Caco-2 (cell line): ENCODE measurements at regions of chr2 and their contacts with region 1.

Region 1: GRCh38 chr2:64523666-64524603 is at the start of gene AFTPH:
- DNase-seq: peak; percentile 99 to 100
- H3K4me3 ChIP-seq: peak within 1 kb of the TSS; percentile 95
- H3K4me3 Mint-ChIP-seq: peak within 1 kb of the TSS; percentile 87
- H3K27ac Mint-ChIP-seq: peak within 1 kb of the TSS; percentile 94
- H3K4me1 ChIP-seq: peaks cover 4% of the 10 kb centered on the region; the same call in 1 of the 2 replicates
- H3K4me1 Mint-ChIP-seq: no peaks in the 10 kb centered on the region
- H3K27me3 ChIP-seq: no peaks in the 10 kb centered on the region
- H3K27me3 Mint-ChIP-seq: peaks cover 2% of the 10 kb centered on the region
- CTCF ChIP-seq: no peak
- total RNA-seq, gene AFTPH: 29.3 and 30.1 TPM in 2 replicates

Region 2: GRCh38 chr2:64363848-64364247 is 160.1 kb before region 1 on chr2:
- CTCF ChIA-PET with region 1: no interaction called
- POLR2A ChIA-PET with region 1: no interaction called
- intact Hi-C with region 1: no loop called
- DNase-seq: no peak
- H3K4me3 ChIP-seq: no peak overlapping the region
- H3K4me3 Mint-ChIP-seq: no peak overlapping the region
- H3K27ac Mint-ChIP-seq: no peak overlapping the region
- H3K4me1 ChIP-seq: peaks cover 24% of the 10 kb centered on the region
- H3K4me1 Mint-ChIP-seq: peaks cover 13% of the 10 kb centered on the region
- H3K27me3 ChIP-seq: no peaks in the 10 kb centered on the region
- H3K27me3 Mint-ChIP-seq: no peaks in the 10 kb centered on the region
- CTCF ChIP-seq: no peak

Region 3: DNA sequence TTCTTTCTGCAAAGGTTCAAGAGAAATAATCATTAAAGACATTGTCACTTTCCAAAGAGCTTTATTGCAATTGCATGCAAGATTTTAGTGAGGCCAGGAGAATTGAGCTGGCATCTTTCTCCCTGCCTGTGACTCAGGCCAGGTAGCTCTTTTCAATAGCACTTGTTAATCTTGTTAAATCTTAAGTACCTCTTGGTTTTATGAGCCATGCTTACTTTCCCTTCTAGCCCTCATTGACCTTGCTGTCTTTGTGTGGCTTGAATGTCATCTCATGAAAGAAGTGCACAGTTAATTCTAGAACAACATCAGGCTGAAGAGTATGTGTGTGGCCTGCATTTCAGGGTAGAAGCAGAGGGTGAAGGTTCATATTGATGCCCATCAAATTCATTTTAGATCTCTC is 84.7 kb before region 1 on chr2:
- CTCF ChIA-PET with region 1: no interaction called
- POLR2A ChIA-PET with region 1: no interaction called
- intact Hi-C with region 1: no loop called
- DNase-seq: no peak
- H3K4me3 ChIP-seq: no peak overlapping the region
- H3K4me3 Mint-ChIP-seq: no peak overlapping the region
- H3K27ac Mint-ChIP-seq: no peak overlapping the region
- H3K4me1 ChIP-seq: peaks cover 15% of the 10 kb centered on the region
- H3K4me1 Mint-ChIP-seq: peaks cover 3% of the 10 kb centered on the region
- H3K27me3 ChIP-seq: no peaks in the 10 kb centered on the region
- H3K27me3 Mint-ChIP-seq: no peaks in the 10 kb centered on the region
- CTCF ChIP-seq: no peak

Region 4: GRCh38 chr2:64453770-64454385 is 70.1 kb before region 1 on chr2 and contains the start of gene LGALSL:
- CTCF ChIA-PET with region 1: interaction called, 4 read pairs
- POLR2A ChIA-PET with region 1: interaction called, 4 read pairs
- intact Hi-C with region 1: loop called (anchors 1 kb)
- DNase-seq: peak; percentile 93 to 94
- H3K4me3 ChIP-seq: peak within 1 kb of the TSS; percentile 80
- H3K4me3 Mint-ChIP-seq: peak within 1 kb of the TSS; percentile 94
- H3K27ac Mint-ChIP-seq: peak within 1 kb of the TSS; percentile 98
- H3K4me1 ChIP-seq: peaks cover 11% of the 10 kb centered on the region
- H3K4me1 Mint-ChIP-seq: peaks cover 13% of the 10 kb centered on the region
- H3K27me3 ChIP-seq: no peaks in the 10 kb centered on the region
- H3K27me3 Mint-ChIP-seq: no peaks in the 10 kb centered on the region
- CTCF ChIP-seq: no peak
- total RNA-seq, gene LGALSL: 36.9 and 37.2 TPM in 2 replicates

Region 5: GRCh38 chr2:64562148-64562784 is 38.3 kb after region 1 on chr2:
- CTCF ChIA-PET with region 1: interaction called, 3 read pairs
- POLR2A ChIA-PET with region 1: no interaction called
- intact Hi-C with region 1: loop called (anchors 1 kb)
- DNase-seq: no peak
- H3K4me3 ChIP-seq: no peak overlapping the region
- H3K4me3 Mint-ChIP-seq: no peak overlapping the region
- H3K27ac Mint-ChIP-seq: no peak overlapping the region
- H3K4me1 ChIP-seq: no peaks in the 10 kb centered on the region
- H3K4me1 Mint-ChIP-seq: no peaks in the 10 kb centered on the region
- H3K27me3 ChIP-seq: no peaks in the 10 kb centered on the region
- H3K27me3 Mint-ChIP-seq: no peaks in the 10 kb centered on the region
- CTCF ChIP-seq: peak in 1 of 2 experiments; percentile 23

Region 6: DNA sequence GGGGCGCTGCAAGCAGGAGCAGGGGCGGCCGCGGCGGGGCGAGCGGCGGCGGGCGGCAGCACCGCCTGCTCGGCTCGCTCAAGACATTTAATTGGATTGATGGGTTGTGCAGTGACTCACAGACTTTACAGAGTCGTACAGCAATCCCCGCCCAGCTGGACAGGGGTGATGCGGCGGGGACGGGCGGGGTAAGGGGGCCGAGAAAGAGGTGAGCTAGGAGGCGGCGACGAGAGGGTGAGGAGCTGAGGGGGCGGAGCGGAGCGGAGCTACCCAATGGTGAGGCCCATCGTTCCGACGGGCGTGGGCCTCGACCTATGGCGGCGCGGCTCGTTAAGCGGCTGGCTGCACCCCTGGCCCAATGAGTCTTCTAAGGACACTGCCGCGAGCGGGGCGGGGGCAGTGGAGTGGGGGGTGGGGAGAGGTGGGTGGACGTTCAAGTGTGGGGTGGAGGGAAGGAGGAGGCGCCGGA is 226.9 kb after region 1 on chr2:
- CTCF ChIA-PET with region 1: interaction called, 9 read pairs
- POLR2A ChIA-PET with region 1: interaction called, 7 read pairs
- intact Hi-C with region 1: loop called (anchors 5 kb)
- DNase-seq: peak; percentile 99
- H3K4me3 ChIP-seq: peak overlapping the region; percentile 73
- H3K4me3 Mint-ChIP-seq: peak overlapping the region; percentile 96
- H3K27ac Mint-ChIP-seq: peak overlapping the region; percentile 93
- H3K4me1 ChIP-seq: peaks cover 18% of the 10 kb centered on the region; the same call in 1 of the 2 replicates
- H3K4me1 Mint-ChIP-seq: peaks cover 16% of the 10 kb centered on the region
- H3K27me3 ChIP-seq: no peaks in the 10 kb centered on the region
- H3K27me3 Mint-ChIP-seq: no peaks in the 10 kb centered on the region
- CTCF ChIP-seq: no peak

Region 7: GRCh38 chr2:64873472-64873924 is 349.6 kb after region 1 on chr2:
- CTCF ChIA-PET with region 1: no interaction called
- POLR2A ChIA-PET with region 1: no interaction called
- intact Hi-C with region 1: loop called (anchors 2 kb)
- DNase-seq: peak; percentile 78 to 91
- H3K4me3 ChIP-seq: no peak overlapping the region
- H3K4me3 Mint-ChIP-seq: no peak overlapping the region
- H3K27ac Mint-ChIP-seq: no peak overlapping the region
- H3K4me1 ChIP-seq: peaks cover 14% of the 10 kb centered on the region; the same call in 1 of the 2 replicates
- H3K4me1 Mint-ChIP-seq: peaks cover 14% of the 10 kb centered on the region
- H3K27me3 ChIP-seq: no peaks in the 10 kb centered on the region
- H3K27me3 Mint-ChIP-seq: no peaks in the 10 kb centered on the region
- CTCF ChIP-seq: peak; percentile 91 to 96

Region 8: DNA sequence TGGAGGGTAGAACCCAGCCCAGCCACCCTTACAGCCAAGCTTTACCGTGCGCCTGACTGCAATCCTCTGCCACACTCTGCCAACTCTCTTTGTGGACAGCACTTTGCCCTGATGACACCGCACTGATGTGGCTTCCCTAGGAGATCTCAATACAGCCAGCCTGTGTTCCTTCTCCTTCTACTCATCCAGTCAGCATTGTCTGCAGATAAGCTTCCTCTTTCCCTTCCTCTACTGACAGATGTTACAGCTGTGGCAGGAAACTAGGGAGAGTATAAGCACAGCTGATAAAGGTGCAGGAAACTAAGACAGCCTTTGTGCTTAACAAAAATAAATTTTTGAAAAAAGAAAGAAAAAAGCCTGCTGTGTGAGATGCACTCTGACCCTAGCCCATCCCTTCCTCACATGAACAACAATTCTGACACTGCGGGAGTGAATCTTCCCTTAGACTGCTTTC is 557.3 kb after region 1 on chr2:
- CTCF ChIA-PET with region 1: no interaction called
- POLR2A ChIA-PET with region 1: no interaction called
- intact Hi-C with region 1: no loop called
- DNase-seq: no peak
- H3K4me3 ChIP-seq: no peak overlapping the region
- H3K4me3 Mint-ChIP-seq: no peak overlapping the region
- H3K27ac Mint-ChIP-seq: no peak overlapping the region
- H3K4me1 ChIP-seq: peaks cover 2% of the 10 kb centered on the region
- H3K4me1 Mint-ChIP-seq: peaks cover under 1% of the 10 kb centered on the region
- H3K27me3 ChIP-seq: no peaks in the 10 kb centered on the region
- H3K27me3 Mint-ChIP-seq: no peaks in the 10 kb centered on the region
- CTCF ChIP-seq: no peak